HEK293 (cell line): ENCODE measurements at regions of chr19 and their contacts with region 1.

Region 1: GRCh38 chr19:28737021-28737895 is 475.7 kb downstream of the UQCRFS1 start:
- H3K4me3 ChIP-seq: no peak overlapping the region
- H3K27ac ChIP-seq: no peak overlapping the region
- H3K4me1 ChIP-seq: no peaks in the 10 kb centered on the region
- CTCF ChIP-seq: 0 out of 2 replicates have a peak, but pooled peaks have one; percentile 39

Region 2: GRCh38 chr19:28656644-28657043 is 80.6 kb before region 1 on chr19:
- CTCF ChIA-PET with region 1: no interaction called
- POLR2A ChIA-PET with region 1: no interaction called
- H3K4me3 ChIP-seq: no peak overlapping the region
- H3K27ac ChIP-seq: no peak overlapping the region
- H3K4me1 ChIP-seq: no peaks in the 10 kb centered on the region
- CTCF ChIP-seq: no peak

Region 3: DNA sequence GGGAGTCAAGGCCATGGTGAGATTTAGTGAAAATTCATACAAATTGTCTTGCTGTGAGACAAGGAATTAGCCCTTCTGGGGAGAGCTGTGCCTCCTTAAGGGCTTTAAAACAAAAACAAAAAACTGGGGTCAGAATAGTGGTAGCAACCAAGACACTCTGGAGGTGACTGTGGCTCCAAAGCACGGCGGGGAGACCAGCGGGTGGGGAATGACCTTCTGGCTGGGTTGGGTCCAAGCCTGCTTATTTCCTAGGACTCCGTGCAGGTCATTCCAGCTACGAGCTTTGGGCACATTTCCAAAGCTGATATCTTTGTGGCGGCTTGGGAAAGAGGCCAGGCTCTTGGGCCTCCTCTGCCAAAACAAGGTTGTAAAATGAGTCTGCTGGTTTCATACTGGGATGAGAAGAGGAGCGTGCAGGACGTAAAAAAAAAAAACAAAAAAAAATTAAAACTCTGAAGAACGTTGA is 127.4 kb after region 1 on chr19:
- CTCF ChIA-PET with region 1: interaction called, 61 read pairs
- POLR2A ChIA-PET with region 1: no interaction called
- H3K4me3 ChIP-seq: no peak overlapping the region
- H3K27ac ChIP-seq: peak overlapping the region; percentile 95
- H3K4me1 ChIP-seq: peaks cover 46% of the 10 kb centered on the region
- CTCF ChIP-seq: no peak

Region 4: GRCh38 chr19:28887920-28888618 is 150.8 kb after region 1 on chr19:
- CTCF ChIA-PET with region 1: interaction called, 263 read pairs
- POLR2A ChIA-PET with region 1: no interaction called
- H3K4me3 ChIP-seq: no peak overlapping the region
- H3K27ac ChIP-seq: no peak overlapping the region
- H3K4me1 ChIP-seq: no peaks in the 10 kb centered on the region
- CTCF ChIP-seq: no peak

Region 5: DNA sequence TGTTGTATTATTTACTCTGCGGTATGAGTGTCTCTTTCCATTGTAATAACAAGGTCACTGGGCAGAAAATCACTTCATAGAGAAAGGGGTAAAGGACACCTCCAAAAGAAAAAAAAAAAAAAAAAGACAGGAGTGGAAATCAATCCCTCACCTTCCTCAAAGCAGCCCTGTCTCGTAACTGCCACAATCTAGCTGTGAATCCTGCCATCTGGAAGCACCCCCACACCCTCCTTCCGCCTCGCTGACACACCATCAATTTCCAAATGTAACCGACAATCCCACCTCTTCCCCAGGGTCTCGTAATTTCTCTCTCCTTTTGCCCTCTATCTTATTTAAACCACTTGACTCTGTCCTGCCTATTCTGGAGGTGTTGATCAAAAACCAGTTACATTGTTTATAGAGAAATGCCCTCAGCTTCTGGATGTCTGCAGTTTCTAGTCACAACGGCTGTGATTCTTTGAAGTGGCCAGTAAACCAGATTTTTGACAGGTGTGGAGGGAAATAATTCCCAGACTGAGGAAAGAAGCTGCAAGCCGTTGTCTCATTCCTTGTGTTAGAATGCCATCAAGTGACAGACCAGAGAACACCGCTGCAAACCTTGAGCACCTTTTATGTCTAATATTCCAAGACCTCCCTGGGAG is 859.7 kb after region 1 on chr19:
- CTCF ChIA-PET with region 1: interaction called, 11 read pairs
- POLR2A ChIA-PET with region 1: no interaction called
- H3K4me3 ChIP-seq: no peak overlapping the region
- H3K27ac ChIP-seq: peak overlapping the region; percentile 37; the same call in 1 of the 2 replicates
- H3K4me1 ChIP-seq: peaks cover 21% of the 10 kb centered on the region
- CTCF ChIP-seq: peak; percentile 87